CD8-positive, alpha-beta T cell (primary cell): ENCODE measurements at regions of chr18 and their contacts with region 1.

Region 1: GRCh38 chr18:74623047-74623816 is 25.6 kb downstream of the ZNF407 start:
- DNase-seq: peak in 5 of 9 experiments; percentile 21 to 51 (median 39)
- ATAC-seq: no peak
- H3K4me3 ChIP-seq: no peak overlapping the region
- H3K4me3 Mint-ChIP-seq: no peak overlapping the region
- H3K27ac ChIP-seq: no peak overlapping the region
- H3K27ac Mint-ChIP-seq: no peak overlapping the region
- H3K4me1 ChIP-seq: peaks cover 12% of the 10 kb centered on the region
- H3K4me1 Mint-ChIP-seq: peaks cover 2% of the 10 kb centered on the region
- H3K27me3 ChIP-seq: no peaks in the 10 kb centered on the region
- H3K27me3 Mint-ChIP-seq: no peaks in the 10 kb centered on the region
- CTCF ChIP-seq: peak; percentile 75

Region 2: GRCh38 chr18:73774811-73775509 is 848.3 kb before region 1 on chr18:
- CTCF ChIA-PET with region 1: no interaction called
- POLR2A ChIA-PET with region 1: no interaction called
- intact Hi-C with region 1: no loop called
- DNase-seq: no peak
- ATAC-seq: no peak
- H3K4me3 ChIP-seq: no peak overlapping the region
- H3K4me3 Mint-ChIP-seq: no peak overlapping the region
- H3K27ac ChIP-seq: no peak overlapping the region
- H3K27ac Mint-ChIP-seq: no peak overlapping the region
- H3K4me1 ChIP-seq: no peaks in the 10 kb centered on the region
- H3K4me1 Mint-ChIP-seq: no peaks in the 10 kb centered on the region
- H3K27me3 ChIP-seq: no peaks in the 10 kb centered on the region
- H3K27me3 Mint-ChIP-seq: no peaks in the 10 kb centered on the region
- CTCF ChIP-seq: no peak

Region 3: GRCh38 chr18:74645679-74646078 is 22.4 kb after region 1 on chr18:
- CTCF ChIA-PET with region 1: interaction called, 6 read pairs
- POLR2A ChIA-PET with region 1: interaction called, 3 read pairs
- intact Hi-C with region 1: loop called in 1 of 2 experiments (anchors 2 kb)
- DNase-seq: no peak
- ATAC-seq: no peak
- H3K4me3 ChIP-seq: no peak overlapping the region
- H3K4me3 Mint-ChIP-seq: no peak overlapping the region
- H3K27ac ChIP-seq: no peak overlapping the region
- H3K27ac Mint-ChIP-seq: no peak overlapping the region
- H3K4me1 ChIP-seq: no peaks in the 10 kb centered on the region
- H3K4me1 Mint-ChIP-seq: peaks cover 11% of the 10 kb centered on the region
- H3K27me3 ChIP-seq: no peaks in the 10 kb centered on the region
- H3K27me3 Mint-ChIP-seq: no peaks in the 10 kb centered on the region
- CTCF ChIP-seq: no peak

Region 4: DNA sequence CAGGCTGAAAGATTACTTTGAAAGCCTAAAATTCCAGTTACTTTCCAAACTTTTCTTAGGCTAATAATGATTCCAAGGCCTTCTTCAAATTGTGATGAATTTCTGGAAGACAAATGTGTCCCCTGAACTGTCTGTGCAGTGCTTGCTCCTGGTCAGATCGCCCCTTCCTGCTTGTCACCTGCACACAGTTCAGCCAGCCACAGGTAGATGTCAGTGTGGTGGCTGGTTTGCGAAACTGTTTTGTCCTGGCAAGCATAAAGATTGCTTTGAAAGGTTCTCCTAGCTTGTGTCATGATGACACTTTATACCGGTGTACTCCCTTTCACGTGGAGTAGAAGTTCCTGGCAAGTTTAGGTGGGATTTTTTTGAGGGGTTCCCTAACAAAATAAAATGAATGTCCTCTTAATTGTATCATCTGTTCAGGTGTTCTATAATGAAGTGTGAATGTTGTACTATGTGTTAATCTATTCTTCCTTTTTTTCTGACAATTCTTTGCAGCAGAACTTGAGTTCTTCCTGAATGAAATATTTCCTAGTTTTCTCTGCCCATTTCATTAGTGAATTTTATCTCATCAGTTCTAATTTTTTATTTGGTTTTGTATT is 273.3 kb after region 1 on chr18:
- CTCF ChIA-PET with region 1: interaction called, 3 read pairs
- POLR2A ChIA-PET with region 1: no interaction called
- intact Hi-C with region 1: loop called (anchors 10 kb)
- DNase-seq: peak in 8 of 9 experiments; percentile 24 to 68 (median 44)
- ATAC-seq: peak; percentile 64
- H3K4me3 ChIP-seq: no peak overlapping the region
- H3K4me3 Mint-ChIP-seq: no peak overlapping the region
- H3K27ac ChIP-seq: no peak overlapping the region
- H3K27ac Mint-ChIP-seq: no peak overlapping the region
- H3K4me1 ChIP-seq: no peaks in the 10 kb centered on the region
- H3K4me1 Mint-ChIP-seq: peaks cover 7% of the 10 kb centered on the region
- H3K27me3 ChIP-seq: no peaks in the 10 kb centered on the region
- H3K27me3 Mint-ChIP-seq: no peaks in the 10 kb centered on the region
- CTCF ChIP-seq: peak; percentile 60

Region 5: DNA sequence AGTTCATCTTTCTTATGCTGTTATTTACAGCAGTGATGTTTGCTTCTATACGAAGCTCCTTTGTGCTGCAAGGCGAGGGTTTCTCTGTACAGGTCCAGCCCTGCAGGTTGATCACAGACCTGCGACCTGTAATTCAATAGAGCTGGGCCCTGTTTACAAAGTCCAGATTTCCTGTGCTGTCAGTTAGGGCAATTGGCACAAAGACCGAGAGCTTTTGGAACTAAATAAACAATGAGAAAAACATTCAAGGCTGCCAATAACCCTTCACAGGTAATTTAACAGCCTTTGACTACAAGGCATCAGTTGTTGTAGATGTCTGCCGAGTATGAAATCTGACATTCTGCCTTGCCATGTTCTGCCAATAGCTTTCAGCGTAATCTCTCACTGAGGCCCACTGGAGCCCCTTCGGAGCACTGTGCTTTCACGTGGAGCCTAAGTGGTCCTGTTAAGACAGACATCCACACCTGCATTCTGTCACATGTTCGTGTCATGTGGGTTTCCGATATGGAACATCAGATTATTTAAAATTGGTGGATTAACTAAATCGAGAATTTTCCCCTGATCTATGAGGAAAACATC is 353.2 kb after region 1 on chr18:
- CTCF ChIA-PET with region 1: no interaction called
- POLR2A ChIA-PET with region 1: no interaction called
- intact Hi-C with region 1: no loop called
- DNase-seq: no peak
- ATAC-seq: no peak
- H3K4me3 ChIP-seq: no peak overlapping the region
- H3K4me3 Mint-ChIP-seq: no peak overlapping the region
- H3K27ac ChIP-seq: no peak overlapping the region
- H3K27ac Mint-ChIP-seq: no peak overlapping the region
- H3K4me1 ChIP-seq: no peaks in the 10 kb centered on the region
- H3K4me1 Mint-ChIP-seq: peaks cover 4% of the 10 kb centered on the region
- H3K27me3 ChIP-seq: no peaks in the 10 kb centered on the region
- H3K27me3 Mint-ChIP-seq: no peaks in the 10 kb centered on the region
- CTCF ChIP-seq: no peak

Region 6: GRCh38 chr18:75364512-75365253 is 741.5 kb after region 1 on chr18:
- CTCF ChIA-PET with region 1: interaction called, 4 read pairs
- POLR2A ChIA-PET with region 1: no interaction called
- intact Hi-C with region 1: loop called (anchors 10 kb)
- DNase-seq: no peak
- ATAC-seq: no peak
- H3K4me3 ChIP-seq: no peak overlapping the region
- H3K4me3 Mint-ChIP-seq: no peak overlapping the region
- H3K27ac ChIP-seq: no peak overlapping the region
- H3K27ac Mint-ChIP-seq: no peak overlapping the region
- H3K4me1 ChIP-seq: no peaks in the 10 kb centered on the region
- H3K4me1 Mint-ChIP-seq: no peaks in the 10 kb centered on the region
- H3K27me3 ChIP-seq: peaks cover 0 to 4% of the 10 kb centered on the region in 2 experiments
- H3K27me3 Mint-ChIP-seq: peaks cover 2% of the 10 kb centered on the region
- CTCF ChIP-seq: no peak

Region 7: DNA sequence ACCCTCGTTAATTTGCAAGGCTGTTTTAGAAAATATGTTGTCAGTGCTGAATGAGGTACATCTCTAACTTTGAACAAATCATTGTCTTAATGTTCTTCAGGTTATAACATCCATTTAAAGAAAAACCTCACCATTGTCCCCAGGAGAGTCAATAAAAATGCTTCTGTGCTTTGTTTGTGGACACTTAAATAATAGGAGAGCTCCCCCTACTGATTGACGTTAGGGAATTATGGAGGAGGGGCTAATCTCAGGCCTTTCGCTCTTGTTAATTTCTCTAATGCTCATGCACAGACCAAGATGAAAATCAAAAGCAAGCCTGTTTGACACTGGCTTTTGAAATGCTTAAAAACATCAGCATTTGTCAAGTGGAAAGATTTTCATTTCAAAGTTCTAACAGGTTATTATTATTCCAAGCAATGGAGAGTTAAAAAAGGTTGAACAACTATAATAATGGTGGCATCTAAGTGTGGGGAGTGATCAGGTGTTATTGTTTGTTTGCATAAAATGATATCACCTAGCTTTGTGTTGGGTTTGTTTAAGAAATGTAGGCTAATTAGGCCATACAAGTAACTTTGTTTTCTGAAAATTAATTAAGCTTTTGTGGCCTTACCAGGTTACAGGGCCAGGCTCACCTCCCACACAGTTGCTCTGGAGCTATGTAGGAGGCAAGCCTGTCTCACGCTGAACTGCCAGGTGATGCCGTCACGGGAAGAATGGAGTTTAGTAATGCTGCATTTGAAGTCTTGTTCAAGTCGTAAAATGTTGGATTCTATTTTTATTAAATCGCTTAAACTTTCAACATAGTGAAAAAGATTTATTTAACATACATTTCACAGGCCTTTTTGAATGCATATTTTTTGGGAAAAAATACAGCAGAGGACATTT is 856.0 kb after region 1 on chr18:
- CTCF ChIA-PET with region 1: interaction called, 10 read pairs
- POLR2A ChIA-PET with region 1: no interaction called
- intact Hi-C with region 1: loop called in 1 of 2 experiments (anchors 1 kb)
- DNase-seq: peak in 2 of 9 experiments; percentile 54 to 65
- ATAC-seq: no peak
- H3K4me3 ChIP-seq: no peak overlapping the region
- H3K4me3 Mint-ChIP-seq: no peak overlapping the region
- H3K27ac ChIP-seq: no peak overlapping the region
- H3K27ac Mint-ChIP-seq: no peak overlapping the region
- H3K4me1 ChIP-seq: no peaks in the 10 kb centered on the region
- H3K4me1 Mint-ChIP-seq: peaks cover 2% of the 10 kb centered on the region
- H3K27me3 ChIP-seq: no peaks in the 10 kb centered on the region
- H3K27me3 Mint-ChIP-seq: peaks cover 4% of the 10 kb centered on the region
- CTCF ChIP-seq: peak; percentile 41

Region 8: GRCh38 chr18:75727456-75727855 is 1104.2 kb after region 1 on chr18:
- CTCF ChIA-PET with region 1: no interaction called
- POLR2A ChIA-PET with region 1: no interaction called
- intact Hi-C with region 1: loop called in 1 of 2 experiments (anchors 10 kb)
- DNase-seq: peak in 4 of 9 experiments; percentile 12 to 23 (median 18)
- ATAC-seq: no peak
- H3K4me3 ChIP-seq: no peak overlapping the region
- H3K4me3 Mint-ChIP-seq: no peak overlapping the region
- H3K27ac ChIP-seq: no peak overlapping the region
- H3K27ac Mint-ChIP-seq: no peak overlapping the region
- H3K4me1 ChIP-seq: no peaks in the 10 kb centered on the region
- H3K4me1 Mint-ChIP-seq: no peaks in the 10 kb centered on the region
- H3K27me3 ChIP-seq: no peaks in the 10 kb centered on the region
- H3K27me3 Mint-ChIP-seq: peaks cover 34% of the 10 kb centered on the region
- CTCF ChIP-seq: no peak

Region 9: DNA sequence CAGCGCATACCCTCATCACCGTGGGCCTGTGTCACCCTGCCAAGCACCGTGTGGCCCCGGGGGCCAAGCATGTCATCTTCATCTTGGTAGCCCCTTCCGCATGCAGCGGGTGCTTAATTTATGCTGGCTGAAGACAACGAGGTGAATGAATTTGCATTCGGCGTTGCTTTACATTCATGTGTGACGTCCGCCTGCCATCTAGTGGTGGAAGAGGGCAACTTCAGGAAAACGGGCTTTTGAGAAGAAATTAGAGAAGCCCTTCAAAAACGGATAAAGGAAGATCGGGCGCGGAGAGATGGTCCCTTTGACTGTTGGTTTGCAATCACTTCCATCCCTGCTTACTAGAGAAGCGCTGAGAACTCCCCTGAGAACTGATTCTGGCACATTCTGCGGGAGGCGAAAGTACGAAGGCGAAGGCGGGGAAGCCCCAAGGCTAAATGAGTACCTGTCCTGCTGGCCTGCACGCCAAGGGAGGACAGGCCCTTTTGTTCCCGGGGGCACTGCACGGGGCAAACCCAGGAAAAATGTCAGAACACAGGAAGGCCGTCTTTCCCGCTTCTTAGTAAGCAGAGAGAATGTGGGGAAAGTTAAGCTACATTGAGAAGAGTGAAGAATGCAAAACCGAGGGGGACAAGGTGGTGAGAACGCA is 1726.0 kb after region 1 on chr18:
- CTCF ChIA-PET with region 1: no interaction called
- POLR2A ChIA-PET with region 1: no interaction called
- intact Hi-C with region 1: loop called in 1 of 2 experiments (anchors 1 kb)
- DNase-seq: peak in 8 of 9 experiments; percentile 40 to 74 (median 60)
- ATAC-seq: peak; percentile 49
- H3K4me3 ChIP-seq: no peak overlapping the region
- H3K4me3 Mint-ChIP-seq: no peak overlapping the region
- H3K27ac ChIP-seq: no peak overlapping the region
- H3K27ac Mint-ChIP-seq: no peak overlapping the region
- H3K4me1 ChIP-seq: no peaks in the 10 kb centered on the region
- H3K4me1 Mint-ChIP-seq: peaks cover 4% of the 10 kb centered on the region
- H3K27me3 ChIP-seq: no peaks in the 10 kb centered on the region
- H3K27me3 Mint-ChIP-seq: peaks cover 7% of the 10 kb centered on the region
- CTCF ChIP-seq: peak; percentile 77